ENCODE measurements at regions of chr18 and their contacts with region 1.

Region 1: GRCh38 chr18:12408247-12408869 is 629 bp downstream of the PRELID3A start:
- DNase-seq: no peak
- CTCF ChIP-seq: no peak

Region 2: DNA sequence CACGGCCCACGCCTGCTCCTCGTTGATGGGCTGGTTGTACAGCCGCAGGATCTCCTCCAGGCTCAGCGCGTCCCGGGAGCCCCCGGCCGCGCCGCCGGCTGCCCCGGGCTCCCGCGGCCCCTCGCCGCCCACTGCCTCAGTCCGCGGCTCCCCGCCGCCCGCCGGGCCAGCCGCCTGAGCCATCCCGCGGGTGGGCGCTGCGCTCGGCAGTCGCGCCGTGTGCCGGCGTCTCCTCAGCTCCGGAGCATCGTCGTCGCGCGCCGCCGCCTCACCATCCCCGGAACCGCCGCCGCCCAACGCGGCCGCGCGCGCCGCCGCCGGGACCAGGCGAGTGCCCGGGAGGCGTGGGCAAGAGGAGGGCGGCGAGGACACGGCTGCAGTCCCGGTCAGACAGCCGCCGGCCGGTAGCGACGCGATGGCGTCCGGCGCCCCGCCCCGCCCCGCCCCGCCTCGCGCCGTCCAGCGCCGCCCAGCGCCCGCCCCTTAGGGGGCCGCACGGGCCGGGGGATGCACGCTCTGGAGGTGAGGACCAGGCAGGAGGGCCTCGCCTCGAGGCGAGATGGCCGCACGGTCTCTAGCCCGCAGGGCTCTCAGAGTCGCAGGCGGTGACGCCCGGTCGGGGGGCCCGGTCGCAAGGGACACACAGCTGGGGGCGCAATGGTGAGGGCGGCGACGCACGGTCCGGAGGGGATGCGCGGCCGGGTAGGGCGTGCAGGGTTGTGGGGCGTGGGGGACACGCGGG is 249.5 kb after region 1 on chr18 and contains the start of gene SPIRE1:
- in situ Hi-C with region 1: loop called (anchors 10 kb)
- DNase-seq: peak; percentile 86
- CTCF ChIP-seq: peak; percentile 13